ENCODE measurements at regions of chr1 and their contacts with region 1.

Region 1: DNA sequence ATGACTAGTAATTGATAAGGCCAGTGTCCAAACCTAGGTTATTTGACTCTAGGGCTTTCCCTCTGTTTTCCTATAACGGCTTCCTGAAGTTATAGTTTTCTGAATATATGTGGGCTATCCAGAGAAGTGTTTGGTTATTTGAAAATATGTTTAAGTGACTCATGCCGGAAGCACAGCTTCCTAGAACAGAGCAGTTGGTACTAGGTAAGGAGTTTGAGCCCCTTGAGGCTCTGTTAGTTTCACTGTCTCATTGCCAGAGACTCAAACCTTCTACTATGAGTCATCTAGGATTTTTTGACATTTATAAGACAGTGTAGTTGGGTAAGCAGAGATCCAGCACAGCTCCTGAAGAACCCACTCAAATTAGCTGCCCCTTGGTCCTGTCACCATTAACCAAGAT is 27.1 kb upstream of the LEPR start:
- DNase-seq: peak; percentile 57
- H3K4me3 Mint-ChIP-seq: no peak overlapping the region
- H3K27ac Mint-ChIP-seq: peak overlapping the region; percentile 69
- H3K4me1 Mint-ChIP-seq: peaks cover 57% of the 10 kb centered on the region
- H3K27me3 Mint-ChIP-seq: no peaks in the 10 kb centered on the region

Region 2: DNA sequence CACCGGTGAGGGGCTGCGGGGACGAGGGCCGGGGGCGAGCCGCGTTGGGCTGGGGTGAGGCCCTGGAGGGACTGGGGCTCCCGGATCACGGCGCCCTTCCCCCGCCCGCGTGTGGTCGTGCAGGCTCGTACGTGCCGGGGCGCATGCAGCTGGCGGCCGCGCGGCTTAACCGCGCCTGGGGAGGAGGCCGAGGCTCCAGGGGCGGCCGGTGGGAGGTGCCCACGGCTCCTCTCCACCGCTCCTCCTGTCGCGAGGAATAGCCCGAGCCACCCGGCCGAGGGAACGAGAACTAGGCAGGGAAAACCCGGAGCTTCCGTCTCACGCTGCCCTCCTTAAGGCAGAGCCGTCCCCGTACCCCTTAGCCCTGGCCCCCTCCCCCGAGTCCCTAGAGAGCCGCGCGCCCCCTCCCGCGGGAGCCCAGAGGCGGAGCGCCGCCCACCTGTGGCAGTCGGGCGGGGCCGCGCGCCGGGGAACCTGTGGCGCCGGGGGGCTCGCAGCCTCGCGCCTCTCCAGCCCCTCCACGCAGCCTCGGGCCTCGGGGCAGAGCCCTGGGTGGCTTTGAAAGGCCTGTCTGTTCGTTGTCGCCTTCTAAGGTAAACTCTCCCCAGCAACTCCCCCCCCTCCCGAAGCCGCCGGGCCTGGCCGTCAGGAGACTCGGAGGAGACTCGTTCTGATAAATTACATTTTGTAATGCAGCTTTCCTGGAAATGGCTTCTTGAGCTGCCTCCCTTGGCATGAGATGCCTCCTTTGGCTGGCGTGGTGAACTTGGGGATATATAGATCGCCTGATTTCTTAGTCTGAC is 244.6 kb before region 1 on chr1:
- CTCF ChIA-PET with region 1: no interaction called
- POLR2A ChIA-PET with region 1: no interaction called
- intact Hi-C with region 1: loop called (anchors 10 kb)
- DNase-seq: peak; percentile 65
- H3K4me3 Mint-ChIP-seq: peak overlapping the region; percentile 76
- H3K27ac Mint-ChIP-seq: no peak overlapping the region
- H3K4me1 Mint-ChIP-seq: peaks cover 14% of the 10 kb centered on the region
- H3K27me3 Mint-ChIP-seq: peaks cover 31% of the 10 kb centered on the region

Region 3: GRCh38 chr1:65230731-65231481 is 162.4 kb before region 1 on chr1:
- CTCF ChIA-PET with region 1: no interaction called
- POLR2A ChIA-PET with region 1: no interaction called
- intact Hi-C with region 1: loop called (anchors 1 kb)
- DNase-seq: peak; percentile 24
- H3K4me3 Mint-ChIP-seq: no peak overlapping the region
- H3K27ac Mint-ChIP-seq: peak overlapping the region; percentile 16
- H3K4me1 Mint-ChIP-seq: peaks cover 17% of the 10 kb centered on the region
- H3K27me3 Mint-ChIP-seq: peaks cover 7% of the 10 kb centered on the region

Region 4: GRCh38 chr1:65260946-65261411 is 132.4 kb before region 1 on chr1:
- CTCF ChIA-PET with region 1: interaction called, 3 read pairs
- POLR2A ChIA-PET with region 1: no interaction called
- intact Hi-C with region 1: loop called (anchors 1 kb)
- DNase-seq: peak; percentile 32
- H3K4me3 Mint-ChIP-seq: no peak overlapping the region
- H3K27ac Mint-ChIP-seq: peak overlapping the region; percentile 57
- H3K4me1 Mint-ChIP-seq: peaks cover 31% of the 10 kb centered on the region
- H3K27me3 Mint-ChIP-seq: peaks cover 8% of the 10 kb centered on the region

Region 5: DNA sequence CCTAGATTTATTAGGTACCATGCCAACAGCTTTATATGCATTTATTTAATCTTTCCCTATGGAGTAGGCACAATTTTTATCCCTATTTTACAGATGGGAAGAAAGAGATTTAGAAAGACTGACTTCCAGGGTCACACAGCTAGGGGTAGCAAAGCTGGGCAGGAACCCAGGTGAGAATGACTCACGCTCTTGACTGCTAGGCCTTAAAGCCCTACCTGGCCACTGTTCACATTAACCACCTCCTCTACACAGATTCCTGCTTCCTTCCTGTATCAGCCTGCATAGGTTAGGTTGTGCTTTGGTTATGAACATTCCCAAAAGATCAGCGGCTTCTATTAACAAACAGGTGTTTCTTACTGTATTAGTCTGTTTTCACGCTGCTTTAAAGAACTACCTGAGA is 30.8 kb before region 1 on chr1:
- CTCF ChIA-PET with region 1: no interaction called
- POLR2A ChIA-PET with region 1: no interaction called
- intact Hi-C with region 1: no loop called
- DNase-seq: no peak
- H3K4me3 Mint-ChIP-seq: no peak overlapping the region
- H3K27ac Mint-ChIP-seq: no peak overlapping the region
- H3K4me1 Mint-ChIP-seq: no peaks in the 10 kb centered on the region
- H3K27me3 Mint-ChIP-seq: no peaks in the 10 kb centered on the region

Region 6: DNA sequence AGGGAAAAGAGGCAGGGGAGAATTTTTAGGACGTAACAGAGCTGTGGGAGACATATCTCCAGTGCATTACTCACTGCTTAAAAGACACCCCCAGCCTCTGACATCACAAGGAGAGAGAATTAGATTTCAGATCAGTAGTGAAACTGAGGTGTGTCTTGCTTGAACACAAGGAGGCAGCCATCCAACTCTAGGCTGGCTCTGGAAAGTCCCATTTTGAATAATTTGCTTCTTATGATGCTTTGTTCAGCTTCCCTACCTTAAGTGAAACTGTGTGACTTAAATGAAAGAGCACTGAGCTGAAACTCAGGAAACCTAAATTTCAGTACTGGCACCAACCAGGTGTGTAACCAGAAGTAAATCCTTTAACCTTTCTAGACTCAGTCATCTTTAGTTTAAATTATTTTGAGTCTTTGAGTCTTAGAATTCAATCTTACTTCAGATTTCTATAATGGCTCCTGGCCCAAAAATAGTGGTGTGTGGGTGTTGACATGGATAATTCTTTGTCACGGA is 889.1 kb after region 1 on chr1:
- CTCF ChIA-PET with region 1: no interaction called
- POLR2A ChIA-PET with region 1: no interaction called
- intact Hi-C with region 1: loop called (anchors 10 kb)
- DNase-seq: peak; percentile 80
- H3K4me3 Mint-ChIP-seq: no peak overlapping the region
- H3K27ac Mint-ChIP-seq: peak overlapping the region; percentile 76
- H3K4me1 Mint-ChIP-seq: peaks cover 87% of the 10 kb centered on the region
- H3K27me3 Mint-ChIP-seq: no peaks in the 10 kb centered on the region